ENCODE measurements at regions of chr15 and their contacts with region 1.

Region 1: GRCh38 chr15:77013776-77014131 is 18.8 kb downstream of the PSTPIP1 start:
- DNase-seq: peak; percentile 96
- ATAC-seq: peak; percentile 80
- H3K4me3 Mint-ChIP-seq: peak overlapping the region; percentile 72
- H3K27ac Mint-ChIP-seq: peak overlapping the region; percentile 99
- H3K4me1 Mint-ChIP-seq: peaks cover 99% of the 10 kb centered on the region
- H3K27me3 Mint-ChIP-seq: no peaks in the 10 kb centered on the region

Region 2: GRCh38 chr15:76987926-76988860 is 25.6 kb before region 1 on chr15:
- CTCF ChIA-PET with region 1: interaction called, 75 read pairs
- POLR2A ChIA-PET with region 1: interaction called, 125 read pairs
- DNase-seq: peak; percentile 74
- ATAC-seq: peak; percentile 72
- H3K4me3 Mint-ChIP-seq: peak overlapping the region; percentile 60
- H3K27ac Mint-ChIP-seq: peak overlapping the region; percentile 94
- H3K4me1 Mint-ChIP-seq: peaks cover 66% of the 10 kb centered on the region
- H3K27me3 Mint-ChIP-seq: no peaks in the 10 kb centered on the region

Region 3: GRCh38 chr15:76994971-76995945 is 18.5 kb before region 1 on chr15 and contains the start of gene PSTPIP1:
- CTCF ChIA-PET with region 1: interaction called, 75 read pairs
- POLR2A ChIA-PET with region 1: interaction called, 125 read pairs
- DNase-seq: peak; percentile 85
- ATAC-seq: peak; percentile 81
- H3K4me3 Mint-ChIP-seq: peak within 1 kb of the TSS; percentile 96
- H3K27ac Mint-ChIP-seq: peak within 1 kb of the TSS; percentile 96
- H3K4me1 Mint-ChIP-seq: peaks cover 72% of the 10 kb centered on the region
- H3K27me3 Mint-ChIP-seq: no peaks in the 10 kb centered on the region
- total RNA-seq, gene PSTPIP1: 208 to 212 TPM

Region 4: DNA sequence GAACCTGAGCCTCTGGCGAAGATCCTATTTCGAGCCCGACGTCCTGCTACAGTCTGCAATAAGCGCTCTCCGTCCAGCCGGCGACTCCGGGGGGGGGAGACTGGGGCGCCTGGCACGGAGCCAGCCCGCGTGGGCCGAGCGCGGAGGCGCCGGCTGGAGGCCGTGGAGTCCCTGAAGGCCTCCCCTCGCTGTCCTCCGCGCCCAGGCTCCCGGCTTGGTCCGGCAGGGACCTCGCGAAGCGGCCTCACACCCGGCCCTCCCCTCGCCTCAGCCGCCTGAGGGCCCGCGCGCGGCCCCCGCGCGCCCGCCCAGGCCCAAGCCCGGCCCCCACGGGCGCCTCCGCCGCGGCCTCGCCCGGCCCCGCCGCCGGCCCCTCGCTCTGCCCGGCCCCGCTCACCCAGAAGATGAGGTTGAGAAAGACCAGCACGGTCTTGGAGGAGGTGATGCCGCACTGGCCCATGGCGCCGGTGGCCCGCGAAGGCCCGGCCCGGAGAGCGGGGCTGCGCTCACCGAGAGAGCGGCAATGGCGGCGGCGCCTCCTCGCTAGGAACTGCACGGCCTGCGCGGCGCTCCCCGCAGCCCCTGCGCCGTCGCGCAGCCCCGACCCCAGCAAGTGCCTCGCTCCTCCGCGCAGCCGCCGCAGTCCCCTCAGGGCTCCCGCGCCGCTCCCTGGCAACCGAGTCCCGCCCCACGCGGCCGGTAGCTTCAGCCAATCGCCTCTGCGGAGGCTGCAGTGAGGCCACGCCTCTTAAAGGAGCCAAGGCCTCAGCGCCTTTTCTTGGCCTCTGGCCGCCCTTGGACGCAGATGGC is 56.9 kb after region 1 on chr15 and contains the start of gene TSPAN3:
- CTCF ChIA-PET with region 1: no interaction called
- POLR2A ChIA-PET with region 1: no interaction called
- DNase-seq: peak; percentile 93
- ATAC-seq: peak; percentile 100
- H3K4me3 Mint-ChIP-seq: peak within 1 kb of the TSS; percentile 77
- H3K27ac Mint-ChIP-seq: peak within 1 kb of the TSS; percentile 63
- H3K4me1 Mint-ChIP-seq: peaks cover 15% of the 10 kb centered on the region
- H3K27me3 Mint-ChIP-seq: peaks cover 11% of the 10 kb centered on the region
- total RNA-seq, gene TSPAN3: 17.4 to 18.4 TPM